Activated CD4-positive, alpha-beta T cell treated with anti-CD3 and anti-CD28 coated beads, Interleukin-2, amount 10 ng/mL, durations not matched to agents 24 days and 14 days (primary cell): ENCODE measurements at regions of chr11 and their contacts with region 1.

Region 1: DNA sequence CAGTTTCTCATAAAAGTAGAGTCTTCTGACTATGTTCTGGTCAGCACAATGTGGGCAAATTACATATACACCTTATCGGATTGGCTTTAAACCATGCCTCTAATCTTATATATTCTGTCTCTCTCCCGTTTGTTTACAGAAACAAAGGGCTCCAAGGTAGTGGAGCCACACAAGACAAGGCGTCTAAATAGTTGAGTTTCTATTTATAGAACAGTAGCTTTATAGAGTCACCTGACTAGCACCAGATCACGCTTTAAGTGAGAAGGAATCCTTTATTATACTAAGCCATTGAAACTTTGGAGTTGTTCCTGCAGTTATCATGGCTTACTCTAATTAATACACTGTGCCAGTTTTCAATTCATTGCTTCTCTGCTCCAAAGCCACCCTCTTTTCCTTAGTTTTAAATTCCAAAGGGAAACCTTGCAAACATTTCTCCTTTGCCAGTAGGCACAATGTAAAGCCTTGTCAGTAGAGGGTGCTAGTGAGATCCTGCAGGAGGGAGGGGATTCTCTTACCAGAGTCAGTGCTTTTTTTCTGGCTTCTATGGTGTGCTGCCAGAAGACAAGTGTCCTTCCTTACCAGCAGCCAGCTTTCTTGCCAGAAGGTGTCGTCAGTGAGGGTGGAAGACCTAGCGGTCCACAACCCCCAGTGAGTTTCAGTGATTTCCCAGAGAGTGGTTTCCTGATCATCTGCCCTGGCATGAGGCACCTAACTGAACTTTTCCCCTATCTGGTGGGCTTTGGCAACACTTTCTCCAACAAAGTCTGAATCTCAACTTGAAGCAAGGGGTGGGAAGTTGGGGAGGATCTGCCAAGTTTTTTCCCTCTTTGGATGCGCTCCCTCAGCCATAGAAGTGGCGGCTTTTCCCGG is 71.7 kb downstream of the RAB38 start:
- DNase-seq: peak; percentile 80
- H3K4me3 Mint-ChIP-seq: no peak overlapping the region
- H3K27ac Mint-ChIP-seq: no peak overlapping the region
- H3K4me1 Mint-ChIP-seq: no peaks in the 10 kb centered on the region
- H3K27me3 Mint-ChIP-seq: peaks cover 20% of the 10 kb centered on the region

Region 2: DNA sequence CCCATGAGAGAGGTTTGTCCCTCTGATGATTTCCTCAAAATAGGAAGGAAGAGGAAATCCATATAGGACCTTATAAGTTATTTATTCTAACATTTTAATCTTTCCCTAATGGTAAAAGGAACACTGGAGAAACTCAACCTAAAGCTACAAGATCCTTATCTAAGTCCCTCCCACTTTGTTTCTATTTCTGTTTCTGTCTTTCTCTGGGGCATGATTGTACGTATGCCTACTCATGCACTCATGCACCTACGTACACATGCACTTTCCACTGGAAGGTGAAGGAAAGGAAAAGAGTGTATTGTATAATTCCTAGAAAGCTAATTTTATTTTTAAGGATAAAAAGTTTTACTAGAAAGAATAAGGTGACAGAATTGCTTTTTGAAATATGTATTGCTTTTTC is 53.3 kb before region 1 on chr11:
- intact Hi-C with region 1: no loop called
- DNase-seq: no peak
- H3K4me3 Mint-ChIP-seq: no peak overlapping the region
- H3K27ac Mint-ChIP-seq: no peak overlapping the region
- H3K4me1 Mint-ChIP-seq: peaks cover 2% of the 10 kb centered on the region
- H3K27me3 Mint-ChIP-seq: peaks cover 2% of the 10 kb centered on the region

Region 3: DNA sequence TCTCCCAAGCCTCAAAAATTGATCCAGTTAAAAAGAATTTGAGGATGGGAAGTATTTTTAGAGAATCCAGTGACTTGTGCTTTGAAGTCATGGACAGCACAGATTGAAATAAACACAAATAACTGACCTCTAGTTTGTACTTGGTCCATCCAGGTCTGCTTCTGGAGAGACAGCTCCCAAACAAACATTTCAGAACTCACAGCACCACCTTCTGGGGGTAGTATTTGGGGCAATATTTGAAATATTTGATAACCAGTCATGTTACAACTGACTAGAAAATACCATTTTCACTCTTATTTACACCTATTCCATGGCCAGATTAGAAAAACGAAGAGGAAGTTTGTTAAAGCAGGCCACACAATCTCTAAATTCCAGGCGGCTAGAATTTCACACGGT is 177.7 kb after region 1 on chr11:
- intact Hi-C with region 1: loop called (anchors 10 kb)
- DNase-seq: no peak
- H3K4me3 Mint-ChIP-seq: no peak overlapping the region
- H3K27ac Mint-ChIP-seq: no peak overlapping the region
- H3K4me1 Mint-ChIP-seq: no peaks in the 10 kb centered on the region
- H3K27me3 Mint-ChIP-seq: no peaks in the 10 kb centered on the region